Heart left ventricle (tissue), 16 donors: ENCODE measurements at regions of chr5 and their contacts with region 1.

Region 1: GRCh38 chr5:95142145-95142544 is 142.7 kb downstream of the MCTP1 start:
- DNase-seq: no peak
- ATAC-seq: peak in 1 of 4 donors; percentile 64
- H3K4me3 ChIP-seq: no peak overlapping the region
- H3K27ac ChIP-seq: peak overlapping the region in 4 of 12 donors; percentile 27 to 62 (median 40)
- H3K4me1 ChIP-seq: peaks cover 0 to 11% (median 2%) of the 10 kb centered on the region in 12 donors
- H3K27me3 ChIP-seq: no peaks in the 10 kb centered on the region
- CTCF ChIP-seq: no peak
- POLR2A ChIP-seq: no peak

Region 2: GRCh38 chr5:95075111-95075510 is 67.0 kb before region 1 on chr5:
- intact Hi-C with region 1: loop called in 2 of 10 experiments (anchors 5 to 10 kb)
- DNase-seq: no peak
- ATAC-seq: no peak
- H3K4me3 ChIP-seq: no peak overlapping the region
- H3K27ac ChIP-seq: peak overlapping the region in 1 of 12 donors; percentile 35
- H3K4me1 ChIP-seq: peaks cover 0 to 50% (median under 1%) of the 10 kb centered on the region in 12 donors
- H3K27me3 ChIP-seq: no peaks in the 10 kb centered on the region
- CTCF ChIP-seq: no peak
- POLR2A ChIP-seq: no peak